ENCODE measurements at regions of chr7 and their contacts with region 1.

Region 1: GRCh38 chr7:12715372-12716133 is 28.1 kb downstream of the ARL4A start:
- DNase-seq: peak; percentile 74 to 98 (median 82)
- ATAC-seq: peak; percentile 86
- H3K4me3 ChIP-seq: peak overlapping the region; percentile 56
- H3K27ac ChIP-seq: peak overlapping the region; percentile 98
- H3K4me1 ChIP-seq: peaks cover 10 to 50% of the 10 kb centered on the region in 2 experiments
- H3K27me3 ChIP-seq: no peaks in the 10 kb centered on the region
- CTCF ChIP-seq: no peak
- EP300 ChIP-seq: peak; percentile 93
- POLR2A ChIP-seq: peak; percentile 94
- RAD21 ChIP-seq: peak in 1 of 2 experiments; percentile 43; a peak in 2 of 4 replicates

Region 2: GRCh38 chr7:12403287-12404181 is 312.0 kb before region 1 on chr7 and contains the start of gene VWDE:
- CTCF ChIA-PET with region 1: no interaction called
- POLR2A ChIA-PET with region 1: no interaction called
- in situ Hi-C with region 1: no loop called
- intact Hi-C with region 1: loop called (anchors 2 kb)
- DNase-seq: peak; percentile 81 to 96 (median 85)
- ATAC-seq: peak; percentile 83
- H3K4me3 ChIP-seq: peak within 1 kb of the TSS; percentile 67
- H3K27ac ChIP-seq: peak within 1 kb of the TSS; percentile 97
- H3K4me1 ChIP-seq: peaks cover 3% of the 10 kb centered on the region in 2 experiments; a peak in 3 of 5 replicates
- H3K27me3 ChIP-seq: no peaks in the 10 kb centered on the region
- CTCF ChIP-seq: peak; percentile 29 to 58 (median 45)
- EP300 ChIP-seq: peak; percentile 57
- POLR2A ChIP-seq: peak; percentile 90
- RAD21 ChIP-seq: peak in 1 of 2 experiments; percentile 22; a peak in 1 of 4 replicates
- polyA plus RNA-seq, gene VWDE: 40.6 to 51.0 TPM

Region 3: GRCh38 chr7:12695965-12696364 is 19.6 kb before region 1 on chr7:
- CTCF ChIA-PET with region 1: no interaction called
- POLR2A ChIA-PET with region 1: interaction called, 23 read pairs
- in situ Hi-C with region 1: no loop called
- intact Hi-C with region 1: no loop called
- DNase-seq: peak in 1 of 4 experiments; percentile 19
- ATAC-seq: no peak
- H3K4me3 ChIP-seq: no peak overlapping the region
- H3K27ac ChIP-seq: no peak overlapping the region
- H3K4me1 ChIP-seq: peaks cover 0 to 2% of the 10 kb centered on the region in 2 experiments; a peak in 2 of 5 replicates
- H3K27me3 ChIP-seq: no peaks in the 10 kb centered on the region
- CTCF ChIP-seq: no peak
- EP300 ChIP-seq: no peak
- POLR2A ChIP-seq: no peak
- RAD21 ChIP-seq: no peak

Region 4: DNA sequence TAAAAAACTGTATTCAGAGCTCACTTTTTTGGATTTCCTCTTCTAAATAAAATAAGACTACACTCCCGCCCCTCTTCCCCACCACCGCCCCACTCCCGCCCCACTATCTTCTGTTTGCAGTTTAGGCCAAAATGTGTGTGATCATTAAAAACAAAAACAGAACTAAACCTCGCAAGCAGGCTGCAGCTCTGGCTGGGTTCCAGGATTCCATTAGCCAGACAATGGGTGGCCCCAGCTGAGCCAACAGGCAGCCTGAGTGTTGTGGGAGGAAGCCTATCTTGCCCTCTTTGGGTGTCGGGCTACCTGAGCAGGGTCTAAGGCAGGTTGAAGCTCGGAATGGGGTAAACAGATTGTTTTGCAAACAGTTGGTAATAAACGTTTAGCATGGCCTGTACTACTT is 13.6 kb after region 1 on chr7:
- CTCF ChIA-PET with region 1: interaction called, 6 read pairs
- POLR2A ChIA-PET with region 1: interaction called, 52 read pairs
- in situ Hi-C with region 1: no loop called
- intact Hi-C with region 1: loop called (anchors 1 kb)
- DNase-seq: peak; percentile 80 to 98 (median 82)
- ATAC-seq: peak; percentile 71
- H3K4me3 ChIP-seq: no peak overlapping the region
- H3K27ac ChIP-seq: peak overlapping the region; percentile 95
- H3K4me1 ChIP-seq: peaks cover 8 to 62% of the 10 kb centered on the region in 2 experiments
- H3K27me3 ChIP-seq: no peaks in the 10 kb centered on the region
- CTCF ChIP-seq: 0 out of 6 replicates have a peak, but pooled peaks of 1 of the 3 experiments have one; percentile 1
- EP300 ChIP-seq: peak; percentile 87
- POLR2A ChIP-seq: no peak
- RAD21 ChIP-seq: no peak; a peak in 2 of 4 replicates

Region 5: GRCh38 chr7:12735923-12736322 is 20.4 kb after region 1 on chr7:
- CTCF ChIA-PET with region 1: no interaction called
- POLR2A ChIA-PET with region 1: interaction called, 10 read pairs
- in situ Hi-C with region 1: no loop called
- intact Hi-C with region 1: loop called (anchors 1 kb)
- DNase-seq: no peak
- ATAC-seq: no peak
- H3K4me3 ChIP-seq: no peak overlapping the region
- H3K27ac ChIP-seq: no peak overlapping the region
- H3K4me1 ChIP-seq: peaks cover 10 to 40% of the 10 kb centered on the region in 2 experiments
- H3K27me3 ChIP-seq: no peaks in the 10 kb centered on the region
- CTCF ChIP-seq: no peak
- EP300 ChIP-seq: no peak
- POLR2A ChIP-seq: no peak
- RAD21 ChIP-seq: no peak

Region 6: GRCh38 chr7:12747687-12748306 is 32.2 kb after region 1 on chr7:
- CTCF ChIA-PET with region 1: no interaction called
- POLR2A ChIA-PET with region 1: interaction called, 7 read pairs
- in situ Hi-C with region 1: no loop called
- intact Hi-C with region 1: loop called (anchors 1 kb)
- DNase-seq: peak in 2 of 4 experiments; percentile 39 to 92
- ATAC-seq: peak; percentile 84
- H3K4me3 ChIP-seq: peak overlapping the region; percentile 5; the same call in 1 of the 2 replicates
- H3K27ac ChIP-seq: peak overlapping the region; percentile 79
- H3K4me1 ChIP-seq: peaks cover 0 to 13% of the 10 kb centered on the region in 2 experiments; a peak in 3 of 5 replicates
- H3K27me3 ChIP-seq: no peaks in the 10 kb centered on the region
- CTCF ChIP-seq: no peak
- EP300 ChIP-seq: peak; percentile 31
- POLR2A ChIP-seq: peak; percentile 25; the same call in 1 of the 2 replicates
- RAD21 ChIP-seq: peak in 1 of 2 experiments; percentile 21; a peak in 1 of 4 replicates

Region 7: GRCh38 chr7:13990984-13991790 is 1275.6 kb after region 1 on chr7:
- CTCF ChIA-PET with region 1: no interaction called
- POLR2A ChIA-PET with region 1: no interaction called
- in situ Hi-C with region 1: loop called (anchors 25 kb)
- intact Hi-C with region 1: loop called (anchors 5 kb)
- DNase-seq: peak; percentile 89 to 98 (median 92)
- ATAC-seq: peak; percentile 77
- H3K4me3 ChIP-seq: peak overlapping the region; percentile 51
- H3K27ac ChIP-seq: peak overlapping the region; percentile 93
- H3K4me1 ChIP-seq: peaks cover 3 to 4% of the 10 kb centered on the region in 2 experiments; a peak in 4 of 5 replicates
- H3K27me3 ChIP-seq: no peaks in the 10 kb centered on the region
- CTCF ChIP-seq: no peak
- EP300 ChIP-seq: peak; percentile 39; the same call in 1 of the 2 replicates
- POLR2A ChIP-seq: peak; percentile 89
- RAD21 ChIP-seq: no peak